ENCODE measurements at regions of chr2 and their contacts with region 1.

Region 1: GRCh38 chr2:181594322-181594721 is 62.6 kb downstream of the CERKL start:
- DNase-seq: no peak
- ATAC-seq: no peak
- H3K4me3 ChIP-seq: no peak overlapping the region
- H3K27ac ChIP-seq: no peak overlapping the region
- H3K4me1 ChIP-seq: no peaks in the 10 kb centered on the region
- H3K27me3 ChIP-seq: peaks cover 0 to 21% (median 0%) of the 10 kb centered on the region in 9 donors
- CTCF ChIP-seq: no peak
- POLR2A ChIP-seq: no peak

Region 2: DNA sequence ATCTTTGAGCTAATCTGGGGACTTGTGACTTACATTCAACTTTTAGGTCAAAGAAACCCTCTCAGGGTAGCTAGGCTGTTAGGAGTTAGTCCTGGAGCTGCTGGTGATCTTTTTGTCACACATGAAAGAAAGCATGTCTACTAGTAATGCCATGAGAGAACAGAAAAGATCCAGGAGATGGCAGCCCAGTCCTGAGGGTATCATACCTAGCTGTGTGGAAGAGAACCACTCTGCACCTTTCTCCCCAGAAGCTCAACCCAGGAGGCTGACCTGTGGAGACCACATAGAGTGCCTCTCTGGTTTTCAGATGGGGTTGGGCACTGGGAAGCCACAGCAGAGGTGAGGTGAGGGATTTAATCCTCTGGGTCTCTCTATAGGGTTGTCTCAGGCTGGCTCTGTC is 1074.1 kb before region 1 on chr2:
- intact Hi-C with region 1: loop called in 1 of 10 experiments (anchors 10 kb)
- DNase-seq: no peak
- ATAC-seq: no peak
- H3K4me3 ChIP-seq: no peak overlapping the region
- H3K27ac ChIP-seq: no peak overlapping the region
- H3K4me1 ChIP-seq: peaks cover 0 to 5% (median 0%) of the 10 kb centered on the region in 12 donors
- H3K27me3 ChIP-seq: no peaks in the 10 kb centered on the region
- CTCF ChIP-seq: no peak
- POLR2A ChIP-seq: no peak

Region 3: DNA sequence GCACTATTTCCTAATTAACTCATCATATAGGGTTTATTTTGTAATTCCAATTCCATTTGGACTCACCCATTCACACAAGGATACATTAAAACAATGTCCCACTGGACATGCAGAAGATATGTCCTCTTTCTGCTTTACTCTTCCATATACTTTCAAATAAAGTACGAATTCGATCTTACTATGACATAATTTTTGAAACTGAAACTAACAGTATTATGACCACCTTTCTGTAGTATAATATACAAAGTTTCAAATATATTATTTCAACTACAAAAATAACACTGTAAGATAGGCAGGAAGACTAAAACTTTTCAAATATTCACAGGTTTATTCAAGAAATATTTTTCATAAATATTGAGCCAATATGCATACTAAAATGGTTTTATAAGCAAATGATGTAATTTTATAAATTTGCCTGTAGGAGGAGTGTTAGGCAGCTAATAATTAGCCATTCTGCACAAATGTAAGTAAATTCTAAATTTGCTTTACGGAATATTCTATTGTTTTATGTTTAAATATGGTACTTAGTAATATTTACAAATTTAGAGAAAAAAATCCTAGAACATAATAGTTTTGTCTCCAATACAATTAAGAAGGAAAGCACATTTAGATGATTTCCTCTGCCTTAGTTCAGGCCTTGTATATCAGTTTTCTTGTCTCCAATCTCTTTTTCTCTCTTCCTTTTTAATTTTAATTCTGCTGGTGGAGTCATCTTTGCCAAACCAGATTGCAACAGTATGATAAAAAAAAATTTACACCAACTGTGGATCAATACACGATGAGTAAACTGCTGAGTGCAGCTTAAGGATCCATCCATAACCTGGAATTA is 23.3 kb before region 1 on chr2:
- intact Hi-C with region 1: no loop called
- DNase-seq: no peak
- ATAC-seq: no peak
- H3K4me3 ChIP-seq: no peak overlapping the region
- H3K27ac ChIP-seq: no peak overlapping the region
- H3K4me1 ChIP-seq: no peaks in the 10 kb centered on the region
- H3K27me3 ChIP-seq: peaks cover 0 to 18% (median 0%) of the 10 kb centered on the region in 9 donors
- CTCF ChIP-seq: peak in 4 of 12 donors; percentile 7 to 35 (median 18)
- POLR2A ChIP-seq: no peak